Mucosa of descending colon (tissue), 3 donors: ENCODE measurements at regions of chr2 and their contacts with region 1.

Region 1: DNA sequence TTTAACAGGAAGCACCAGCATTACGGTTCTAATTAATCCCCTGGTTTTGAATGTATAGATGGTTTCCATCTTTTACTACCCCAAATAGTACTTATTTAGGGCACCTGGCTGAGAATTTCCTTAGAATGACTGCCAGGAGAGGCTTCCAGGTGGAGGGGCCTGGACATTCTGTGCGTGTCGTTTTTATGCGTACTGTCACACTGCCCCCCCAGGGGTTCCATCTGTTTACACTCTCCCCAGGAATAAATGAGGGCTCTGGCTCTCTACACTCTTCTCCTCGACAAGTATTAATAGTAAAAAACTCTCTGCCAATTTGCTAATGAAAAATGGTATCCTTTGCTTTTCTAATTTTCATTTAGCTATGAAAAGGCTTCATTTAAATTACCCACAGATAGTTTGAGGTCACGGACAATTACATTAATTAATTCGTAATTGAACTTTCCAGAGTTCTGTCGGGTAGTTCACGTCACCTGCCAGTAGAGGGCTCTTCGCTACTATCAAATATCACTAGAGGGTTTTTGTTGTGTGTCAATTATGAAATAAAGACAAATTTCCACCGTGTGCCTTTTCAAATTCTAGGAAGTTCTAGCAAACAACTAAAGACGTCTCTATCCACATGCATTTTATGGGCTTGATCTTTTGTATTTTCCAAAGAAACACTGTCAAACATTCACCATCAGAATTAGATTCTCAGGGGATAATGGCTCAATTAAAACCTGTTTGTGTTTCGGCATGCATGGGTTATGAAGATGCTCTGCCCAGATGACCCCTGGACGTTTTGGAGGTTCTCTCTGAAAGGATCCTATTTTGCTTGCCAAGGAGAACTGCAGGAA is 88.8 kb upstream of the ASB18 start:
- DNase-seq: peak in 1 of 3 donors; percentile 30
- ATAC-seq: no peak
- H3K4me3 ChIP-seq: no peak overlapping the region
- H3K4me1 ChIP-seq: no peaks in the 10 kb centered on the region
- CTCF ChIP-seq: peak; percentile 57

Region 2: DNA sequence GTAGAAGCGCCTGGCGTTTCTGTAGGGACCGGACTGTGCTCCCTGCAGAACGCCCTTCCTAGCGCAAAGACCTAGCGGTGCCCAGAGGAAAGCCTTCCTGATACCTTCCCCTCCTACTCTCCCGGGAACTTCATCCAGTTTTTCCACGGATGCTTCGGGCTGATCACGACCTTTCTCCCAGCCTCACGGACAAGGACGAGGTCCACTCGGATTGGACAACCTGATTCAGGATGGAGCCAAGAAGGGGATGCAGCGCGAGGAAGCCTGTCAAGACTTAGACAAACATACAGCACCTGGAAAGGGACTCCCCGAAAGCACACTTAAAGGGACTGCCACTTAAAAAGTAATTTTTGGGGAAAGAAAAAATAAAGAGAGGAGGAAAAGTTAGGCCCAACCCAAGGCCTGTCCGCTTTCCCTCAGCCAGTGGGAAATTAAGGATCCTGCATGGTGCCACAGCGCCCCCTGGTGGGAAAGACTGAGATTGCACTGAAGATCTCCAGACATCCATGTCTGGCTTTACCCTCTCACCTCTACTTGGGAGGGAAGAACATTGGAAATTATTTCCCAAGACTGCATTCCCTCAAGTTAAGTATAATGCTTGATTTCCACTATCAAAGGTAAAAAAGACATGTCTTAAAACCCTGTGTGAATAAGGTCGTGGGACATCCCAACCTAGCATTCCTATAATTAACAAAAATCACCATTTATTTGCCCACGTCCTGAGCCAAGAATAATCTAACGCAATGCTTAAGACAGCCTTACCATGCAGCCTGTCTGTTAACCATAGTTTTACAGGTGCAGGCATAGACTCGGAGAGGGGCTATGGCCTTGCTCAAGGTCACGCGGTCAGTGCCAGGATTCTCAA is 719.3 kb after region 1 on chr2:
- intact Hi-C with region 1: loop called (anchors 5 to 10 kb)
- DNase-seq: peak in 2 of 3 donors; percentile 77 to 89
- ATAC-seq: peak; percentile 92
- H3K4me3 ChIP-seq: no peak overlapping the region
- H3K4me1 ChIP-seq: no peaks in the 10 kb centered on the region
- CTCF ChIP-seq: peak; percentile 83